Tibial artery (tissue), 4 donors: ENCODE measurements at regions of chr1 and their contacts with region 1.

Region 1: DNA sequence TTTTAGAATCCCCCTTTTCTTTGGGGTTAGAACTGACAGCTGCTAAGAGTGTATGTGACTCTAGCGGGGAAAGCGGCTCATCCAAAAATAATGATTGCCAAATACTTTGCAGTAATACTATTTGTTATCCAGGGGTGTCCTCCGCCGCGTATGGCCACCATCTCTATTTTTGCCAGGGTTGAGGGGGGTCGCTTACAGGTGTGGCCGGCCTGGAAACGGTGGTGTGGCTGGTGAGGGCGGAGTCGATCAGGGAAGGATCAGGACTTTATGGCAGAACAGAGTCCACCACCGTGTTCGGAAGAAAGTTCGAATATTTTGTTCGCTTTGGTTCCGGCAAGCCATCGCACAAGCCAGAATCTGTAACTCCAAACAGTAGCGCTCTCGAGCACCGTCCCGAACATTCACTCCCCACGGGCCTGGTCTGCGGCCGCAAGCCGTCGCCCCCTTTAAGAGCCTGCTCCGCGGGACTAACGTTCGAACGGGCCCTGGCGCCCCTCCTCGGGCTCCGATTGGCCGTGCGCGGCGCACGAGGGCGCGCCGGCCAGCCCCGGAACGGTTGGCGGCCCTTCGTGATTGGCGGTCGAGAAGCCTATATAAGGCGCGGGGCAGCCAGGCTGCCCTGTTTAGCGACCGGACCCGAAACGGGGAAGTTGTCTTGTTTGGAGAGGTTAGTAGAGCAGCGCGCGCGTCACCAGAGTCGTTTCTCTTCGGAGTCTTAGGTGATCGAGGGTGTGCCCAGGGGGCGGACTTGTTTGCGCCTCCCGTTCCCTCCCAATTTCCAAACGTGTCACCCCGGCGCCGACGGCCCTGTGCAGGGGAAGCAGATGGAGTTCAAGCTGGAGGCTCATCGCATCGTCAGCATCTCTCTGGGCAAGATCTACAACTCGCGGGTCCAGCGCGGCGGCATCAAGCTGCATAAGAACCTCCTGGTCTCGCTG is at the start of gene IER5:
- DNase-seq: peak; percentile 97 to 98
- H3K4me3 ChIP-seq: peak within 1 kb of the TSS; percentile 89 to 90
- H3K27ac ChIP-seq: peak within 1 kb of the TSS; percentile 88 to 93
- H3K4me1 ChIP-seq: peaks cover 0 to 40% (median 15%) of the 10 kb centered on the region in 4 donors
- H3K27me3 ChIP-seq: no peaks in the 10 kb centered on the region
- CTCF ChIP-seq: peak in 1 of 2 experiments; percentile 16

Region 2: DNA sequence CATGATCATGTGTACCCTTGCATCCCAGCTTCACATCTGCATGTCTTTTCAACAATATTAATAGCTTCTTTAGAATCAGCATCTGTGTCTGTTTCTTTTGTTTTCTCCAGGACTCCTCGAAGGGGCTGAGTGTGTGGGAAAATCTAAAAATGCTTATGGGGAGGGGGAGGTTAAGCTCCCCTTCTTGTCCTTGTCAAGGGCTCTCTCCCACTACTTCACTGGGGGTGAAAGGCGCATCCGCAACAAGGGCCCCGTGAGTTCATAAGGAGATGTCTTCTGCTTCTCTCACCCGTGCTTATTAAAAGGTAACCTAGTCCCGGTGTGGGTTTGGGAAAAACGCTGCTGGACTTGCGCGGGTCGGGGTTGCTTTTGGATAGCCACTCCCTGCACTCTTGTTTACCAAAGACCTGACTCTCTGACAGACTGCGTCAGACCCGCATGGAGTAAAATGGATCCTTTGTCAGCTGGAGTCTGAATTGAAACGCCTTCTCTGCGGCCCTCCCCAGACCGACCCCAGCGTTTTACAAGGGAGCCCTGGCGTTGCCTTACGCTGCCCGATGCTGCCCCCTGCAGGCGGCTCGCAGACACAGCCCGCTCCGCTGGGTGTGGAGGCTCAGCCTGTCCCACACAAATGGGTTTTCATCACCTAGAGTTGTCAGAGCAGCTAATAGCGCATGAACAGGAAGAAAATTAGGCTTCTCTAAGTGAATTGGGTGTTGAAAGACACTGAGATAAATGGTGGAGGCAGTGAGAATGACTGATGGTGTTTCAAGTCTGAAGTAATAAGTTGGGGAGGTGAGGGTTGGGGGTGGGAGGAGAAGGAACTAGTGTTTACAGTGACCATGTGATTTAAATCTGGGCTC is 54.0 kb after region 1 on chr1:
- intact Hi-C with region 1: loop called (anchors 5 kb)
- DNase-seq: peak; percentile 78 to 89
- H3K4me3 ChIP-seq: peak overlapping the region; percentile 17 to 40
- H3K27ac ChIP-seq: peak overlapping the region; percentile 48 to 49
- H3K4me1 ChIP-seq: peaks cover 0 to 32% (median 20%) of the 10 kb centered on the region in 4 donors
- H3K27me3 ChIP-seq: no peaks in the 10 kb centered on the region
- CTCF ChIP-seq: peak; percentile 94 to 98

Region 3: GRCh38 chr1:181604482-181605249 is 516.3 kb after region 1 on chr1:
- intact Hi-C with region 1: no loop called
- DNase-seq: no peak
- H3K4me3 ChIP-seq: no peak overlapping the region
- H3K27ac ChIP-seq: no peak overlapping the region
- H3K4me1 ChIP-seq: no peaks in the 10 kb centered on the region
- H3K27me3 ChIP-seq: no peaks in the 10 kb centered on the region
- CTCF ChIP-seq: no peak